Left ventricle myocardium superior (tissue), 1 donor: ENCODE measurements at regions of chr1 and their contacts with region 1.

Region 1: GRCh38 chr1:180269761-180270527 is 39.9 kb downstream of the LHX4 start:
- DNase-seq: no peak
- ATAC-seq: peak; percentile 69

Region 2: GRCh38 chr1:179856296-179856695 is 413.6 kb before region 1 on chr1:
- intact Hi-C with region 1: no loop called
- DNase-seq: no peak
- ATAC-seq: no peak

Region 3: DNA sequence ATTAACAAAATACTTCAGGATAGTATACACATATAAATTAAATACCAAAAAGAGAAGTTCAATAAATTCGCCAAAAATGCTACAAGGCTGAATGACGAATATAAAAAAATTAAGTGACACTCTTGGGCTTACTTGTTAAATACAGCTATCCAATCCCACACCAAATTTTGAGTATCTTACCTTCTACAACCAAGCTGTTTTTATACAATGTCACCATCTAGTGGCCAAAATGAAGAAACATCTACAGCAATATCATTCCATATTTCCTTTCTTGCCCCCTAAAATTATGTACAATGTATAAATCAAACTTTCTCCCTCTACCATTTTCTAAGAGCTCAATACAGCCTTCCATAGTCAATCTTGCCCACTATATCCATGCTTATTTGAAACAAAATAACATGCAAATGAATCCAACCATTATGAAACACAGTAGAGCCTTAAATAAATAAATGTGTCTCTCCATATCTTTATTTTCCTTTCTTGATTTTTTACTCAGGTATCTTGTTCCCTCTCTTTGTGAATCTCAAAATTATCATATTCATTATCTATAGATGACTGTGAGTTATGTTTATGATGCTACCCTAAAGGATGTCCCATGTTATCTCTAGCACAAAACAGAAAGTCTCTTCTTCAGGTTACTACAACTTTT is 146.2 kb after region 1 on chr1:
- intact Hi-C with region 1: loop called (anchors 10 kb)
- DNase-seq: no peak
- ATAC-seq: no peak